Activated CD8-positive, alpha-beta T cell treated with anti-CD3 and anti-CD28 coated beads for 36 hours (primary cell): ENCODE measurements at regions of chr3 and their contacts with region 1.

Region 1: GRCh38 chr3:150913133-150913922 is 8.1 kb upstream of the MINDY4B start:
- DNase-seq: no peak
- ATAC-seq: no peak
- H3K4me3 Mint-ChIP-seq: no peak overlapping the region
- H3K27ac Mint-ChIP-seq: no peak overlapping the region
- H3K4me1 Mint-ChIP-seq: no peaks in the 10 kb centered on the region
- H3K27me3 Mint-ChIP-seq: peaks cover 6% of the 10 kb centered on the region
- CTCF ChIP-seq: no peak

Region 2: DNA sequence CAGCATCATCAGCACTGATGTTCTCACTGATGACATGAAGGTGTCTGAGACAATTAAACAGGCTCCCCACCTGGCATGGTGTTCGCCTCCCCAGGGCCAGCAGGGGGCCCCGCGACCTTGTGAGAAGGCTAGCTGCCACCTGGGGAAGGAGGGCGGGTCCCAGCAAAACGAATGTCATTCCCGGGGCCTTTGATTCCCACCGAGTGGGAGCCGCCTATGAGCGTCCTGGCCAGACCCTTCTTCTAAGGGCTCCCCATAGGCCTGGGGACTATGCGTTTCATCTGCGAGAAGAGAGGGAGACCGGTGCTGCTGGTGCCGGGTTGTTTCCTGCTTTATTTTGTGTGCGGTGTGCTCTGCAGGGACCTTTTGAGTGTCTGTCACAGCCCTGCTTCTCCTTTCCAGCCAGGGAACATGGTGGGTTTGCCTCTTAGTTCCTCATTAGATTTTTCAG is 12.4 kb after region 1 on chr3:
- CTCF ChIA-PET with region 1: interaction called, 12 read pairs
- POLR2A ChIA-PET with region 1: no interaction called
- intact Hi-C with region 1: no loop called
- DNase-seq: peak; percentile 76
- ATAC-seq: peak; percentile 96
- H3K4me3 Mint-ChIP-seq: peak overlapping the region; percentile 41
- H3K27ac Mint-ChIP-seq: no peak overlapping the region
- H3K4me1 Mint-ChIP-seq: peaks cover 6% of the 10 kb centered on the region
- H3K27me3 Mint-ChIP-seq: peaks cover 10% of the 10 kb centered on the region
- CTCF ChIP-seq: peak; percentile 80